ENCODE measurements at regions of chr1 and their contacts with region 1.

Region 1: DNA sequence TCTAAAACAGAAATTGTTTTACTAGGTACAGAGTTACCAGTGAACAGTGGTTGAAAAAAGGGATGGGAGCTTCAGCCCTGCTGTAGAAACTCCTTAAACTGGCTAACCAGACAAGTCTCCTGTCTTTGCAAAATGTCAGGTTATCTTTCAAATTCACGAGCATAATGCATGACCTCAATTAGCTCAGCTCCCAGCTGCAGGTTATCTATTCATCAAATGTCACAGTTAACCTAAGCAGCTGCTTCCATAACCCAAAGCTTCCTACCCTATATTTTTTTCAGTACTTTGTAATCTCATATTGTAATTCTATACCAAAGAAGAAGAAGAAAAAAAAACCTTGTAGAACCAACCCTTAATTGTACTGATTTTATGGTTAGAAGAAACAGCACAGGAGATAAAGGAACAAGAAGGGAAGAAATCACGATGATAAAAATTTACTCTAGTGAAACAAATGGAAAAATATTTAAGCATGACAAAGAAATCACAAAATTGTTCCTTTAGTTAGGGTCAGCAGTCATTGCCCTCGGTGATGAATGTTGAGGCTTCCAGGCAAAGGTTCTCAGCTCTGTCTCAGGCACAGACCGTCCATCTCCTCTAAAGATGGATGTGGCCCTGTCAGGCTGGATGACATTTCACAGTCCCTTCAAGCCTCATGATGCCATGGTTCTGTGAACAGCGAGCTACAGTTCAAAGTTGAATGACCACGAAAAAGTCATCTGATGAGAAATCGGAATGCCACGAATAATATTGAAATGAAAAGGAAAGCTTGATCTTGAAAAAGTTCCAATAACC is 95.9 kb downstream of the PLD5 start:
- DNase-seq: peak; percentile 29
- H3K4me3 ChIP-seq: no peak overlapping the region
- H3K27ac ChIP-seq: peak overlapping the region; percentile 14 to 100; a peak in 3 of 4 replicates
- H3K4me1 ChIP-seq: peaks cover 0 to 29% of the 10 kb centered on the region in 2 experiments; a peak in 2 of 4 replicates
- H3K27me3 ChIP-seq: no peaks in the 10 kb centered on the region
- CTCF ChIP-seq: no peak
- EP300 ChIP-seq: peak in 1 of 2 experiments; percentile 95; a peak in 2 of 4 replicates
- RAD21 ChIP-seq: peak; percentile 22

Region 2: DNA sequence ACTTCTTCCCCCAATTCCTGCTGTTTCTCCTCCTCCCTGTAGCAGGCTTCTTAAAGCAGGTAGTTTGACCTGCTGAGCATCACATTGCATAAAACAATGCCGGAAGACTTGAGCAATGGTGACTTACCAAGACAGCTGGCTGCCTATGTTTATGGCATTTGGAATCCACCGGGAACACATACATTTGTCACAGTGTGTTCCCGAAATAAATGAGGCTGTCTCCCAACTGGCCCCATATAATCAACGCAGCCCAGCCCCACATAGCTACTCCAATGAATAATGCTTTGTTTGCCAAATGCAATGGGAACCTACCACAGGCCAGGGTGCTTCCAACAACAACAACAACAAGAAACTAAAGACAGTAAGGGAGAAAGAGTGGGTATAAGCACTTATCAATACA is 243.6 kb before region 1 on chr1:
- CTCF ChIA-PET with region 1: no interaction called
- POLR2A ChIA-PET with region 1: no interaction called
- DNase-seq: no peak
- H3K4me3 ChIP-seq: no peak overlapping the region
- H3K27ac ChIP-seq: no peak overlapping the region
- H3K4me1 ChIP-seq: no peaks in the 10 kb centered on the region
- H3K27me3 ChIP-seq: no peaks in the 10 kb centered on the region
- CTCF ChIP-seq: no peak
- EP300 ChIP-seq: no peak
- RAD21 ChIP-seq: no peak

Region 3: GRCh38 chr1:242205622-242206489 is 222.7 kb before region 1 on chr1:
- CTCF ChIA-PET with region 1: no interaction called
- POLR2A ChIA-PET with region 1: no interaction called
- DNase-seq: no peak
- H3K4me3 ChIP-seq: no peak overlapping the region; a peak in 1 of 4 replicates
- H3K27ac ChIP-seq: no peak overlapping the region
- H3K4me1 ChIP-seq: peaks cover 0 to 2% of the 10 kb centered on the region in 2 experiments; a peak in 1 of 4 replicates
- H3K27me3 ChIP-seq: no peaks in the 10 kb centered on the region
- CTCF ChIP-seq: no peak
- EP300 ChIP-seq: no peak
- RAD21 ChIP-seq: no peak

Region 4: GRCh38 chr1:242318140-242318539 is 110.5 kb before region 1 on chr1:
- CTCF ChIA-PET with region 1: no interaction called
- POLR2A ChIA-PET with region 1: no interaction called
- DNase-seq: no peak
- H3K4me3 ChIP-seq: no peak overlapping the region
- H3K27ac ChIP-seq: no peak overlapping the region
- H3K4me1 ChIP-seq: no peaks in the 10 kb centered on the region; a peak in 1 of 4 replicates
- H3K27me3 ChIP-seq: no peaks in the 10 kb centered on the region
- CTCF ChIP-seq: no peak
- EP300 ChIP-seq: no peak
- RAD21 ChIP-seq: no peak

Region 5: DNA sequence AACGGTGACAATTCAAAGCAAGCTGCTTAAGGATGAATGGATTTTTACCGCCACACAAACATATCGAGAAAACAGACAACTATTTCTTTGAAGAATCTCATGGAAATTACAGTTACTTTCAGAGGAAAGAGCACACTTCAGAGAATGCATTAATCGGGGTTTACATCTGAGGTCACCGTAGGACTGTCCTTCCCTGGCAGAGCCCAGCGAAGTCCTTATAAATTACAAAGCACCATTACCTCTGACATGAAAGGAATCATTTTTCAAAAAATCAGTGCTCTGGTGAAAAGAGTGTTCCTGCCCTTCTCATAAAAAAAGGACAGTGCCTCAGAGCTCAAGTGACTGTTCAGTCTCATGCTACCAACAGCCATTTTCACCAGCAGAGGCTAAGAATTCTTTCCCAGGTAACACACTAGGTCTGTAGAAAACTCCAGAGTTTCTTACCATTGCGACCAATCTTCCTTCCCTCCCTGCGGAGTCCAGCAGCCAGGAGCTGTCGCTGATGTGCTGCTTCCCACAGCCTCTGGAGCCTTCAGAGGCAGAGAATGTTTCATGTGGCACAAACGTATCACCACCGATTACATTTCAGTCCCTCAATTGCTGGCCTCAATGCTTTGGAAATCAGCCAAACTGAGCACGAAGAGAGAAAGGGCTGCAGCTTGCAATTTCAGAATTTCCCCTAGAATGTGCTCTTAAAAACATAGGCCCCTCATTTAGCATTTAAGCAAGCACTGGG is 20.5 kb after region 1 on chr1:
- CTCF ChIA-PET with region 1: interaction called, 15 read pairs
- POLR2A ChIA-PET with region 1: interaction called, 19 read pairs
- DNase-seq: peak; percentile 46
- H3K4me3 ChIP-seq: peak overlapping the region in 1 of 2 experiments; percentile 27; a peak in 2 of 4 replicates
- H3K27ac ChIP-seq: peak overlapping the region in 1 of 2 experiments; percentile 96; a peak in 2 of 4 replicates
- H3K4me1 ChIP-seq: peaks cover 0 to 22% of the 10 kb centered on the region in 2 experiments; a peak in 2 of 4 replicates
- H3K27me3 ChIP-seq: no peaks in the 10 kb centered on the region
- CTCF ChIP-seq: no peak
- EP300 ChIP-seq: peak in 1 of 2 experiments; percentile 10; a peak in 1 of 4 replicates
- RAD21 ChIP-seq: peak; percentile 23; the same call in 1 of the 2 replicates

Region 6: GRCh38 chr1:242690849-242691602 is 262.4 kb after region 1 on chr1:
- CTCF ChIA-PET with region 1: no interaction called
- POLR2A ChIA-PET with region 1: no interaction called
- DNase-seq: no peak
- H3K4me3 ChIP-seq: no peak overlapping the region
- H3K27ac ChIP-seq: no peak overlapping the region
- H3K4me1 ChIP-seq: no peaks in the 10 kb centered on the region
- H3K27me3 ChIP-seq: no peaks in the 10 kb centered on the region
- CTCF ChIP-seq: no peak
- EP300 ChIP-seq: no peak
- RAD21 ChIP-seq: no peak

Measured in SK-N-SH (cell line).